Endothelial cell of umbilical vein (primary cell): ENCODE measurements at regions of chr12 and their contacts with region 1.

Region 1: DNA sequence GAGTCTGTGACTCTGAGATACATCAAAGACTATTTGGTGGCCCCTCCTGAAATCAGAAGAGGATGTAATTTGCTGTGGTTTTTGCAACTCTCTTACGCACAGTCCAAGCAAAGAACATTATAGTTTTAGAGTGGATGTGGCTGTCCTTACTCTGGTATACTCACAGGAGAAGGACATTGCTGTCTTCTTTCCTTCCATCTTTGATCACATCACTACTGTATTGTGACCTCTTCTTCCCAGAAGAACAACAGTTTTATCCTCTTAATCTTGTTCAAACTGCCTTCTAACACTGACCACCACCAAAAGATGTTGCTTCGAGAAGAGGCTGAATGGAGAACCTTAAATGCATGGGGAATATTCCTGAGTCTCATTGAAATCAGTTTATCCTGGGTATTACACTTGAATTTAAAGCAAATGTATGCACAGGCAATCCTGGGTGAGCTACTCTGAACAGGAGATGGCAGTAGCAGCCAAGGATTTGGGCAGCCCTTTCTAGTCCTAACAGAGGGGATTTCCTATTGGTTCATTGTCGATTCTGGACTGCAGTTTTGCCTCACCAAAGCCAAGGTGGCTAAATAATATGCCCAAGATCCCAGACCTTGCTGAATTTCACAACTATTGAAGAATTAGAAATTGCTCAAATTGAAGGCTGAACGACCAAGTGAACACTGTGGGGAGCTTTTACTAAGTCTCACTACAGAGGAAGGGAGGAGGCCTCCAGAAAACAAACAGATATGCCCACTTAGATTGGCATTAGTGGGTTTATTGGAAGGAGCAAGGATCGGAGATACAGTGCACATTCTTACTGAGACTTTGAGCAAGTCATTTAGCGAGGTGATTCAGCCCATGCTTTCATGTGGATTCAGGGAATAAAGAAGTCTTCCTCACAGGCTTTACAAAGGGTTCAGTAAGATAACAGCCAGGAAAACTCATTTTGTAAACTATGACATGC is 282.8 kb downstream of the PAWR start:
- DNase-seq: peak; percentile 88
- H3K4me3 ChIP-seq: no peak overlapping the region
- H3K27ac ChIP-seq: peak overlapping the region; percentile 25
- H3K4me1 ChIP-seq: peaks cover 9% of the 10 kb centered on the region
- H3K27me3 ChIP-seq: no peaks in the 10 kb centered on the region
- CTCF ChIP-seq: peak; percentile 72 to 86
- POLR2A ChIP-seq: no peak

Region 2: DNA sequence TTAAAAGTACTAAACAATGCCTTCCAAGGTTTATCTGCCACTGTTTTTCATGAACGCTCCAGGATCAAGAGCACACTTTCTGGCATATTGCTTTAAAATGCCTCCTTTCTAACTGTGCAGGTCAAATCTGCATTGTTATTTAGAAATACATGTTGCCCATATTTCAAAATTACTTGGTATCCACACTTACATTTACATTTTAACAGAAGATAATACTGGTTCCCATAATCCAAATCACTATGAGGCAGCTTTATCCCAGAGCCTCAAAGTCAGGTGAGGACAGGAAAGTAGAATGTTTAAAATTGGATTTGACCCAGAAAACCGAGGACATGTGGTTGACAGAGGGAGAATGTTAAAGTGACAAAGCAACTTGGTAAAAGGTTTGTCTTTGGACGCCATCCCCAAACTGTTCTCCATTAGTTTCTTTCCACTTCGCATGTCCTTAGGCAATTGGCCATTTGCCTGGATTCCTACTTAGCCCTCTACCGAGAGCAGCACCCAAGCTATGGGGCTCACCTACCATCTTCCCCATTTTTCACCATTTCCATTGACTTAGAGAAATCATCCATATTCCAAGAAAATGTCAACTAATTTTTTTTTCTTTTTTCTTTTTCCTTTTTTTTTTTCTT is 70.2 kb before region 1 on chr12:
- CTCF ChIA-PET with region 1: no interaction called
- POLR2A ChIA-PET with region 1: no interaction called
- dilution Hi-C with region 1: no loop called
- intact Hi-C with region 1: no loop called
- DNase-seq: no peak
- H3K4me3 ChIP-seq: no peak overlapping the region
- H3K27ac ChIP-seq: no peak overlapping the region
- H3K4me1 ChIP-seq: no peaks in the 10 kb centered on the region
- H3K27me3 ChIP-seq: no peaks in the 10 kb centered on the region
- CTCF ChIP-seq: no peak
- POLR2A ChIP-seq: no peak

Region 3: DNA sequence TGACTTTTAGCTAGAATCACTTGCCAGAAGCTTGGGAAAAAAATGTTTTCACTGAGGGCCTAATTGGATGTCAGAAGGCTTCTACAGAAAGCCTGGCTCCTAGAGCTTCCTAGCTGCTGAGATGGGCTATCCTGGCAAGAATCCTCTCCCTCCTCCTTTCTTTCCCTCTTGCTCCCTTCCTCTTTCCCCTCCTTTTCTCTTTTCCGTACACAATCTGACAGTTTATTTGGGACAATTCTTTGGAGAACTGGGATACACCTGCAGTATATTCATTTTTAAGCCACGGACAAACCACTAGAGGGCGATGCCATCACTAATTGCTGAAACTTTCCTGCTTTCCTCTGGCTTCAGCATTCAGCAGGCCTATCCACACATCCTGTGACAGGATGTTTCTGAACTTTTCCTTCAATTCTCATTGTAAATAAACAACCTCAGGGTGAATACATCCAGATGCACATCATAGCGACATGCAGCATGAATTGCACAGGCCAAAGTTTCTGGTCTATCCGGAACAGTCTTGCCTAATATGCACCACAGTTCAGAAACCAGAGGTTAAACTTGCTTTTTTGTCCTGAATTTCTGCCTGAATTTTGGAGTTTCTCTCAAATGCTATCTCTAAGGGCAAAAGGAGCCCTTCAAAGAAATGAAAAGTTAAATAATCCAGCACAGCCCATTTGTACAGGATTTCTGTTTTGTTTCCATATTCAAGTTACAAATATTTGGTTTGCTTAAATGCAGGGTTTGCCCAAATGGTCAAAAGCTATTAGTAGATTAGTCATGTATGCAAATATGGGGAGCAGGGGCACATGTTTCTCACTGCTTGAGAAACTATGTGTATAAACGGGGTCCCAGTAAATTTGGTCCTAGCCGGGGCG is 140.0 kb after region 1 on chr12:
- CTCF ChIA-PET with region 1: interaction called, 13 read pairs
- POLR2A ChIA-PET with region 1: interaction called, 8 read pairs
- dilution Hi-C with region 1: no loop called
- intact Hi-C with region 1: loop called (anchors 1 kb)
- DNase-seq: peak; percentile 95
- H3K4me3 ChIP-seq: peak overlapping the region in 1 of 3 experiments; percentile 37
- H3K27ac ChIP-seq: peak overlapping the region; percentile 99
- H3K4me1 ChIP-seq: peaks cover 55% of the 10 kb centered on the region
- H3K27me3 ChIP-seq: no peaks in the 10 kb centered on the region
- CTCF ChIP-seq: peak; percentile 58 to 74
- POLR2A ChIP-seq: peak; percentile 69

Region 4: GRCh38 chr12:79690638-79691493 is 282.9 kb after region 1 on chr12 and contains the start of gene PAWR:
- CTCF ChIA-PET with region 1: interaction called, 5 read pairs
- POLR2A ChIA-PET with region 1: no interaction called
- dilution Hi-C with region 1: no loop called
- intact Hi-C with region 1: loop called (anchors 5 kb)
- DNase-seq: peak; percentile 83
- H3K4me3 ChIP-seq: peak within 1 kb of the TSS; percentile 85 to 96 (median 88)
- H3K27ac ChIP-seq: peak within 1 kb of the TSS; percentile 85
- H3K4me1 ChIP-seq: peaks cover 28% of the 10 kb centered on the region
- H3K27me3 ChIP-seq: no peaks in the 10 kb centered on the region
- CTCF ChIP-seq: peak in 1 of 2 donors; percentile 37
- POLR2A ChIP-seq: peak; percentile 21
- total RNA-seq, gene PAWR: 154 and 175 TPM in 2 replicates

Region 5: DNA sequence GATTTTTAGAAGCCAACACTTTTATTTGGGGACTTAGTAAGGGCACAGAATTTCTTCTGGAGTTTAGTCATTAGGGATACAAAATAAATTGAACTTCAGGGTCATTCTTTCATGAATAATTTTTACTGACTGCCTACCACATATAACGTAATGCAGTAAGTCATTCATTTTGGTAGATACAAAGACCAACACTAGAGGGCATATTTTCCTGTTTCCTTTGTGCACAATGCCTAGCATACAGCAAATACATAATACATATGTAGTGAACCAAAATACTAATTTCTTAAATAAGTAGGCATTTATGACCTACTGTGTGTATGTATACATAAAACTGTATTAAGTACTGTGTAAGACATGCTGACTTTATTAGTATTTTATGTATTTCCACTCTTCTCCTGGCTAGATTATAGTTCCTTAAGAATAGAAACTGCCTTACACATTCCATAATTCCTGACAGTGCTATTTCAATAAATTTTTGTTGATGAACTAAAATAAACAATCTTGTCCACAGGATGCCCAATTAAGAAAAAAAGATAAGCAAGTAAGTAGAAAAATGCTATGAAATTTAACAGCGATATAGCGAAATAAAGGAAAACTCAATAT is 479.1 kb after region 1 on chr12:
- CTCF ChIA-PET with region 1: interaction called, 4 read pairs
- POLR2A ChIA-PET with region 1: no interaction called
- dilution Hi-C with region 1: no loop called
- intact Hi-C with region 1: loop called (anchors 2 kb)
- DNase-seq: peak; percentile 77
- H3K4me3 ChIP-seq: no peak overlapping the region
- H3K27ac ChIP-seq: peak overlapping the region; percentile 3
- H3K4me1 ChIP-seq: peaks cover 30% of the 10 kb centered on the region
- H3K27me3 ChIP-seq: no peaks in the 10 kb centered on the region
- CTCF ChIP-seq: peak; percentile 33 to 39
- POLR2A ChIP-seq: no peak

Region 6: GRCh38 chr12:80400571-80400991 is 992.6 kb after region 1 on chr12:
- CTCF ChIA-PET with region 1: no interaction called
- POLR2A ChIA-PET with region 1: no interaction called
- dilution Hi-C with region 1: no loop called
- intact Hi-C with region 1: loop called (anchors 10 kb)
- DNase-seq: peak; percentile 26
- H3K4me3 ChIP-seq: peak overlapping the region; percentile 6 to 48 (median 33)
- H3K27ac ChIP-seq: no peak overlapping the region
- H3K4me1 ChIP-seq: no peaks in the 10 kb centered on the region
- H3K27me3 ChIP-seq: no peaks in the 10 kb centered on the region
- CTCF ChIP-seq: no peak
- POLR2A ChIP-seq: no peak

Region 7: DNA sequence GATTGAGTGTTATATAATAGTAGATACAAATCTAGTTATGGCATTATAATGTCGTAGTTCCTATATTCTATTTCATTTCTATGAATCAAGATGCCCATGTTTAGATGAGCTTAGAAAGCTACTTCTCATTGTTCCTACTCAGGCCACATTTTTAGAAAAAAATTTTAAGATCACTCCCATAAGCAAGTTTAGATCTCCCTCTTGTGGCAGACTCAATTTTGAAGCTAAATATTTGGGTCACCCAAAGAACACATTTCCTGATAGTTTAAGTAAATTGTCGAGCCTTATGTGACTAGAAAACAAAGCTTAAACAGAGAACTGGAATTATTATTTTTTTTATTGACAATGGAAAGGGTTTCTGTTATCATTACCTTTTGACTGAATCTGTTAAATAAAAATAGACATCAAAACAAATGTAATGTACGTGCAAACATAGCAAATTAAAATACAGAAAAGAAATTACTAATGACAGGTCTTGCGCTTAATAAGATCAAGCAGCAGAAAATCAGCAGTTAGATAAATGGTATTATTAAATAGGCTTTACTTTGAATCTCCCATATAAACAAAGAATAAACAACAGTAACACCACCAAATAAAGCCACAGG is 1850.1 kb after region 1 on chr12:
- CTCF ChIA-PET with region 1: no interaction called
- POLR2A ChIA-PET with region 1: no interaction called
- dilution Hi-C with region 1: no loop called
- intact Hi-C with region 1: loop called (anchors 2 kb)
- DNase-seq: peak; percentile 66
- H3K4me3 ChIP-seq: no peak overlapping the region
- H3K27ac ChIP-seq: no peak overlapping the region
- H3K4me1 ChIP-seq: peaks cover 2% of the 10 kb centered on the region
- H3K27me3 ChIP-seq: peaks cover 0 to 3% of the 10 kb centered on the region in 2 experiments
- CTCF ChIP-seq: peak; percentile 13 to 40
- POLR2A ChIP-seq: no peak